Activated CD4-positive, alpha-beta memory T cell treated with anti-CD3 and anti-CD28 coated beads, Interleukin-2, amount 10 ng/mL, durations not matched to agents 7 days and 5 days (primary cell): ENCODE measurements at regions of chr17 and their contacts with region 1.

Region 1: DNA sequence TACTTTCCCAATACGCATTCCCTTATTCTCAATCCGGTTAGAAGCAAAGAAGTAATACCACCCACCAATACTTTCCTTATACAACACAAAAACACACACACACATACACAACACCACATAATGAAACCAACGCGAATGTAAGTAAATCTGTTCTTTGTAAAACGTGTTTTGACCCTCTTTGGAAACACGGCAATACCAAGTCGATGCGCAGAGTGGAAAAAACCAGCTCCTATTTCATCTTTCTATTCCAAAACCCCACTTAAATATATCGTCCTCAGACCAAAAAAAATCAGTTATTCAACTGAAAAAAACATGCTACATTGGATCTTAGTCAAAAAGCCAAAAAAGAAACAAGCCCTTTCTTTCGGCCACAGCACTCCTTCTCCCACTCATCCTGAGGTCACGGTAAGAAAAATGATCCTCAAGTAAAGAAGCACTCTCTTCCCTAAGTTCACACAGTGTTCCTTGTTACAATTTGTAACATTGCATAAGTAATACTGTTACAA is 31.0 kb upstream of the ARL4D start:
- DNase-seq: peak; percentile 57
- H3K4me3 Mint-ChIP-seq: peak overlapping the region; percentile 86
- H3K27ac Mint-ChIP-seq: peak overlapping the region; percentile 99
- H3K4me1 Mint-ChIP-seq: peaks cover 52% of the 10 kb centered on the region
- H3K27me3 Mint-ChIP-seq: no peaks in the 10 kb centered on the region

Region 2: DNA sequence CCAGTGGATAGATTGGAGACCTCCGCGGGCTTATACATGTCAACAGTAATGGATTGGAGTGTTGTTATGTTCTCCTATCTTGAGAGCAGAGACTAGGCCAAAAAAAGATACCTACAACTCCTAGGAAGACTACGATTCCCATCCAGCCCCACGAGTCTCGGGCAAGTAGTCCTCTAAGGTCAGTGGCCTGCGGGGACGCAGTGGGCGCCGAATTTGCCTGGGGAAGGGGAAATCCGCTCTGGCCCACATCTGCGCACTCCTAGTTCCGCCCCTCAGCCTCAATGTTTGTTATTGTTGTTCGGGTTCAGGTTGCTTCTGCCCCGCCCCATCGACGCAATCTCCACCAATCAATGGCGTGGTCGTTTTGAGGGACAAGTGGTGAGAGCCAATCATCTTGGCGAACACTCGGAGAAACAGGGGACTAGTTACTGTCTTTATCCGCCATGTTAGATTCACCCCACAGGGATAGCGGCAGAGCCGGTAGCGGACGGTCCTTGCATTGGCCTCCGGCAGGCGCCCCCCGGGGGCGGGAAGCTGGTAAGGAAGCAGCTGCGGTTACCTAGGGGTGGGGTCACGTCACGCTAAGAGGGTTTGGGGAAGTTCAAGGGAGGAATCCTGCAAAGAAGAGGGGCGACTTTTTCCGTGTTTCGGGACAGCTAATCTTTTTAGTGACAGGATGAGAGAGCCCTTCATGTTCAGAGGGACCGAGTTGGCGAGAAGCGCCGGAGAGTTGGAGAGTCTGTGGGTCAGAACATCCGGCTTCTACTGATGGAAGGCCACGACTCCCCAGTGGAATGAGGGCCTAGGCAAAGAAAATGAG is 196.8 kb before region 1 on chr17 and contains the start of gene NBR1:
- CTCF ChIA-PET with region 1: no interaction called
- POLR2A ChIA-PET with region 1: interaction called, 15 read pairs
- DNase-seq: peak; percentile 98
- H3K4me3 Mint-ChIP-seq: no peak within 1 kb of the TSS
- H3K27ac Mint-ChIP-seq: no peak within 1 kb of the TSS
- H3K4me1 Mint-ChIP-seq: peaks cover 39% of the 10 kb centered on the region
- H3K27me3 Mint-ChIP-seq: no peaks in the 10 kb centered on the region
- total RNA-seq, gene NBR1: 68.1 to 69.8 TPM

Region 3: GRCh38 chr17:43330876-43331639 is 36.7 kb before region 1 on chr17:
- CTCF ChIA-PET with region 1: interaction called, 6 read pairs
- POLR2A ChIA-PET with region 1: interaction called, 35 read pairs
- DNase-seq: no peak
- H3K4me3 Mint-ChIP-seq: no peak overlapping the region
- H3K27ac Mint-ChIP-seq: no peak overlapping the region
- H3K4me1 Mint-ChIP-seq: peaks cover 7% of the 10 kb centered on the region
- H3K27me3 Mint-ChIP-seq: peaks cover 32% of the 10 kb centered on the region

Region 4: GRCh38 chr17:43351691-43352090 is 16.1 kb before region 1 on chr17:
- CTCF ChIA-PET with region 1: no interaction called
- POLR2A ChIA-PET with region 1: interaction called, 167 read pairs
- DNase-seq: no peak
- H3K4me3 Mint-ChIP-seq: no peak overlapping the region
- H3K27ac Mint-ChIP-seq: peak overlapping the region; percentile 67
- H3K4me1 Mint-ChIP-seq: peaks cover 25% of the 10 kb centered on the region
- H3K27me3 Mint-ChIP-seq: no peaks in the 10 kb centered on the region

Region 5: GRCh38 chr17:43393944-43394482 is 26.2 kb after region 1 on chr17:
- CTCF ChIA-PET with region 1: interaction called, 27 read pairs
- POLR2A ChIA-PET with region 1: interaction called, 903 read pairs
- DNase-seq: peak; percentile 91
- H3K4me3 Mint-ChIP-seq: no peak overlapping the region
- H3K27ac Mint-ChIP-seq: peak overlapping the region; percentile 47
- H3K4me1 Mint-ChIP-seq: peaks cover 50% of the 10 kb centered on the region
- H3K27me3 Mint-ChIP-seq: no peaks in the 10 kb centered on the region

Region 6: DNA sequence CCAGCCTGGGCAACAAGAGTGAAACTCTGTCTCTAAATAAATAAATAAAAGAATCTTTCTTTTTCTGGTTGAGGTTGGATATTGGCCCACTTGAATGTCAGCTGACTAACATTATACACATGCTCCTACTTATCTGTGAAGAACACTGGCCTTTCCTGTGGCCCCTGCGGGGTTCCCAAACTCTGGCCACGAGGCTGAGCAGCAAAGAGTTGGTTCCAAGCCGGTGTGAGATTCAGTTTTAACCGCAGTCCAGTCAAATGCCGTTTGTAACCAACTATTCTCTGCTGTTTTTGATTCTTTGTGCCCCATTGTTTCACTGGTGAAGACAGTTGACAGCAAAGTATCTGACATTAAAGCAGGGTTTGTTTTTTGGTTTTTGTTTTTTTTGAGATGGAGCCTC is 167.1 kb after region 1 on chr17:
- CTCF ChIA-PET with region 1: no interaction called
- POLR2A ChIA-PET with region 1: no interaction called
- DNase-seq: no peak
- H3K4me3 Mint-ChIP-seq: no peak overlapping the region
- H3K27ac Mint-ChIP-seq: no peak overlapping the region
- H3K4me1 Mint-ChIP-seq: peaks cover 7% of the 10 kb centered on the region
- H3K27me3 Mint-ChIP-seq: no peaks in the 10 kb centered on the region